ENCODE measurements at regions of chr6 and their contacts with region 1.

Region 1: GRCh38 chr6:37566111-37566949 is 66.6 kb upstream of the CCDC167 start:
- DNase-seq: peak; percentile 34
- H3K4me3 ChIP-seq: peak overlapping the region; percentile 10
- H3K27ac ChIP-seq: no peak overlapping the region
- H3K4me1 ChIP-seq: no peaks in the 10 kb centered on the region
- H3K27me3 ChIP-seq: peaks cover 9% of the 10 kb centered on the region
- CTCF ChIP-seq: peak; percentile 80

Region 2: DNA sequence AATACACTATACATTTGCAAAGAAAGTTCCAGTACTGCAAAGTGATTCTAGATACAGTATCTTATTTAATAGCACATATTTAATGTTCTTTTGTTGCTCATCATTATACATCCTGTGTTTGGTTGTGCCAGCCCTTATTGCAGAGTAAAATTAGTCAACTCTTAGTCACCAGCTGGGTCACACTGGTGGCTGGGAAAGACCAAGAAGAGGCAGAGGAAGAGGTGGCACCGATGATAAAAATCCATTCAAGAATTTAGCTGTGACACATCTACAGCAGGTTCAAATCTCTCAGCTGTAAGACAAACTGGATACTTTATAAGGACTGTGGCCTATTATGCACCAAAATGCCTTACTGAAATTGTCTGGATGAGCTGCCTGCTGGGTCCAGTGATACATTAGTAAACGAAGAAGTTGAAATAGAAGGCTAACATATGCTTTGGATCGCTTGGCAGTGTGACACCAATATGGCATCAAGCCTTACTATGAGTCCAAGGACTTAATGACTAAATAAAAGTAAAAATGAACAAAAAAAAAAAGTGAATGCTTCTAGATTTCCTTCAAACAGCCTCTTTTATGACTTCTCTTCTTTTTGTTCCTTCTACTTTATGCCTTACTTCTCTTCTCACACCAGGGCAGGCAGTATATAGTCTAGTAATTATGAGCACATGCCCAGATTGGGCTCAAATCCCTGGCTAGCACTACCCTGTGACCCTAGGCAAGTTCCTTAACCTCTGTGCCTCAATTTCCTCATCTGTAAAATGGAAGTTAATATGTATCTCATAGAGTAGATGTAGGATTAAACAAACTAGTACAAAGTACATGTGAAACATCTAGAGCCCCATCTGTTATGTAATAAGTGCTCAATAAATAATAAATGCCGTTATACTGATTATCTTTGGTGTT is 241.9 kb before region 1 on chr6:
- intact Hi-C with region 1: loop called (anchors 5 kb)
- DNase-seq: no peak
- H3K4me3 ChIP-seq: no peak overlapping the region
- H3K27ac ChIP-seq: no peak overlapping the region
- H3K4me1 ChIP-seq: no peaks in the 10 kb centered on the region
- H3K27me3 ChIP-seq: no peaks in the 10 kb centered on the region
- CTCF ChIP-seq: no peak

Region 3: DNA sequence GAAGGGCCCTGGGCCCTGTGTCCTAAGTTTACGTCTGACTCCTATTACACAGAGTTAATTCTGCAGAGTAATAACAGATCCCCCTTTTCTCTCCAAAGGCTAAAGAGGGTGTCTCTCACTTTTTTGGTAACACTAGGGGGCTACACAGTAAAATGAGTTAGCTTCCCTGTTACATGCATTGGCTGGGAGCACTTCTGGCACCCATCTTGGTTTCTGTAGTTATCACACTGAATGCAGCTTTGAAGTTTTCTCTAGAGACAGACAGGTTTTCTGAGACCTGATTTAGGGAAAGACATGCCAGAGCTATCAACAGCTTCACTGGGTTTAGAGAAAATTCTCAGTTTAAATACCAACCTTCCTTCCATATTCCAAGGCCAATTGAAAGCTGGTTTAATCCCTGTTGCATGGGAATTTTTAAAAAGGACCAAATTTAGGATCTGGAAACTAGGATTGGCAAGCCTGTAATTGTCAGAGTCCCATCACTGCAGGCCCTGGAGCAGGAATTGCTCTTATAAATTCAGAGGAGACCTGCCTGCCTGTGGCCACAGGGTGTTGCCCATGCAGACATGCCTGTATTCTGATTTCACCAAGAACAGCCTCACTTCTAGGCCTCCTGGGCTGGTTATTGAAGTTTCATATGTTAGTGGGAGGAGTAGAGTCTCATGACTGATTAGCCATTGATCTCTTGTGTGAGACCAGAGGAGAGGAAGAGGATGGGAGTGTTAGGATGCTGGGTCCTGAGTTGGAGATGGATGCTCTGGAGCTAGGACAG is 183.2 kb before region 1 on chr6:
- intact Hi-C with region 1: loop called (anchors 2 kb)
- DNase-seq: no peak
- H3K4me3 ChIP-seq: no peak overlapping the region
- H3K27ac ChIP-seq: no peak overlapping the region
- H3K4me1 ChIP-seq: no peaks in the 10 kb centered on the region
- H3K27me3 ChIP-seq: no peaks in the 10 kb centered on the region
- CTCF ChIP-seq: no peak

Region 4: DNA sequence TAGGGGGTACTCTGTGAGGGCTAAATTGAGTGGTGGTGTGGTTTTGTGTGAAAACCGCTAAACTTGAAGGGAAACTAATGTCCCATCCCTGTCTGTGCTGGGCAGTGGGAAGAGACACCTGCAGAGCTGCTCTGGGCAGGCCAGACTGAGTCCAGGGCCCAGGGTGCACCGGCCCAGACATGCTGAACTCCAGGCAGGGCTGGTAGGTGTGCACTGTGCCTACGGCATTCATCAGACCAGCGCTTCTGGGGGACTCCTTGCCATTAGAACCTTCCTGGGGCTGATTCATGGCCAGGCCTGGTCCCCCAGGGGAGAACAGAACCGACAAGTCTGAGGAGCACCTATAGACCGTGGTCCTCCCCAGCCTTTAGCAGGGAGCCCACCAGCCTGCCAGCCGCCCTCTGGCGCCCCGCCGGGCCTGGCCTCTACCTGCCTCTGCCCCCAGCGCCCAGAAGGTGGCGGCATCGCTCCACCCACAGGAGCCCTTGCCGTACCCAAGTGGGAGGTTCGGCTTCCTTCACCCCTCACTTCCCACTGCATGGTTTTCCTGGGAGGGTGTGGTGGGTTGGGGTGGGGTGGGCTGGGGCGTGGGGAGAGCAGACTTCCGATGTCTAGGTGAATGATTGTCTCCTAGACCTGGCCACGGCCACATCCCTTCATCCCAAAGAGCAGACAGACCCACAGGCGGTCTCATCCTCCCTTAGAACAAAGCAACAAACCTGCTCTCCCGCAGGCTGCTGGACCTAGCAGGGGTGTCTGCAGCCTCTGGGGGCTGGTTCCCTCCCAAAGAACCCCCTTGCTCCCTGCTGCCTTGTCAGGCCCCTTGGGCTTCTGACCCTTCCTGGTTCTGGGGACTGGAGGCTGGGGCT is 82.2 kb before region 1 on chr6:
- intact Hi-C with region 1: loop called (anchors 5 kb)
- DNase-seq: peak; percentile 51
- H3K4me3 ChIP-seq: no peak overlapping the region
- H3K27ac ChIP-seq: no peak overlapping the region
- H3K4me1 ChIP-seq: no peaks in the 10 kb centered on the region
- H3K27me3 ChIP-seq: no peaks in the 10 kb centered on the region
- CTCF ChIP-seq: peak; percentile 67

Region 5: DNA sequence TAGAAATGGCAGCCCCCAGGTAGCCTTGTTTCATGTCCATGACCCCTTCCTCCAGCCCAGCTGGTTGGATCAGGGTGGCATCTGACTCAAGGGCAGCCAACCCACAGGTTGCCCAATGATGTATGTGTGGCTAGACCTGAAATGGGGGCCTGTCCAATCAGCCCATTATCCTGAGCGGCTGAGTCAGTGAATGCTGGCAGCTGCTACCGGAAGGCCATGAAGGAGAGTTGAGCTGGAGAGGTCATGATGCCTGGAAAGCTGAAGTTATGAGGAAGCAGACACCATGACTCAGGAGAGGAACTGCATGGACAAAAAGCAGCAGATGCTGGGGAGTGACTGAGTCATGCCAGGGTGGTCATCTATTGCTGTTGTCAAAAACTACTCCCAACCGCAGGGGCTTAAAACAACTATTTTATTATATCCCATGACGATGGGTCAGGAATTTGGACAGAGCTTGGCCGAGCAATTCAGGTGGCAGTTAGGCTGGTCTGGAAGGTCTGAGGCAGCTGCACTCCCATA is 64.0 kb after region 1 on chr6:
- intact Hi-C with region 1: no loop called
- DNase-seq: no peak
- H3K4me3 ChIP-seq: no peak overlapping the region
- H3K27ac ChIP-seq: no peak overlapping the region
- H3K4me1 ChIP-seq: no peaks in the 10 kb centered on the region
- H3K27me3 ChIP-seq: no peaks in the 10 kb centered on the region
- CTCF ChIP-seq: no peak

Region 6: DNA sequence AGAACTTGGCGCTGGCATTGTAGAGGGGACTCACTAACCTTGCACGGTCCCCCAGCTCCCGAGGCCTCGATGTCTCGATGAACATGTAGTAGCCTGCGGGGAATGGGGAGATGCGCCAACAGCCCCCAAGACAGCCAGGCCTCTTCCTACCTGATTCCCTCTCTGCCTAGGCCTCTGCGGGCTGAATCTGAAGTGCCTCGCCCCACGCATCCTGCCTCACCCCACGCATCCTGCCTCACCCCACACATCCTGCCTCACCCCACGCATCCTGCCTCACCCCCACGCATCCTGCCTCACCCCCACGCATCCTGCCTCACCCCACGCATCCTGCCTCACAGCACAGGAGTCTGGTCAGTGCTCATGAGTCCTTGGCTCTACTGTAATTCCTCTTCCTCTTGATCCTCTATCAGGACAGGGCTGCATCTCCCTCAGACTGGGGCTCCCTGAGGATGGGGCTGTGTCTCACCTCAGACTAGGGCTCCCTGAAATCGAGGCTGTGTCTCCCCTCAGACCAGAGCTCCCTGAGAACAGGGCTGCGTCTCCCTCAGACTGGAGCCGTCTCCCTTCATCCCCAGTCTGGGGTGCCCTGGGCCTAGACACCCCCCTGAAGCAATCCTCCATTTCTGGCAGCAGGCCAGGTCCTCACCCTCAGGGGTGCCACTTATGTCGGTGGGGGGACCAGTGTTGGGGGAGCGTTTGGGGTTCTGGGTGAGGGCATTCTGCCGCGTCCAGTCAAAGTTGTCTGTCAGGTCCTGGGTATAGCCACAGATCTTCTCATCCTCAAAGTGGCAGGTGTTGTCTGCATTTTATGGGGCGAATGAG is 77.7 kb after region 1 on chr6:
- intact Hi-C with region 1: no loop called
- DNase-seq: no peak
- H3K4me3 ChIP-seq: no peak overlapping the region
- H3K27ac ChIP-seq: no peak overlapping the region
- H3K4me1 ChIP-seq: no peaks in the 10 kb centered on the region
- H3K27me3 ChIP-seq: peaks cover 6% of the 10 kb centered on the region
- CTCF ChIP-seq: no peak